ENCODE measurements at regions of chr7 and their contacts with region 1.

Region 1: GRCh38 chr7:93147363-93147762 is 822 bp downstream of the SAMD9L start:
- DNase-seq: peak; percentile 29 to 35
- H3K4me3 ChIP-seq: peak overlapping the region; percentile 43
- H3K27ac ChIP-seq: 0 out of 2 replicates have a peak overlapping the region, but pooled peaks have one; percentile 19
- H3K4me1 ChIP-seq: peaks cover 23% of the 10 kb centered on the region; the same call in 1 of the 2 replicates
- H3K27me3 ChIP-seq: no peaks in the 10 kb centered on the region
- CTCF ChIP-seq: no peak

Region 2: GRCh38 chr7:93228302-93228701 is 80.9 kb after region 1 on chr7:
- CTCF ChIA-PET with region 1: no interaction called
- POLR2A ChIA-PET with region 1: no interaction called
- intact Hi-C with region 1: no loop called
- DNase-seq: peak in 1 of 2 experiments; percentile 64
- H3K4me3 ChIP-seq: no peak overlapping the region
- H3K27ac ChIP-seq: no peak overlapping the region
- H3K4me1 ChIP-seq: peaks cover 14% of the 10 kb centered on the region; the same call in 1 of the 2 replicates
- H3K27me3 ChIP-seq: no peaks in the 10 kb centered on the region
- CTCF ChIP-seq: peak; percentile 90

Region 3: GRCh38 chr7:94301024-94301586 is 1153.7 kb after region 1 on chr7:
- CTCF ChIA-PET with region 1: no interaction called
- POLR2A ChIA-PET with region 1: interaction called, 25 read pairs
- intact Hi-C with region 1: no loop called
- DNase-seq: peak; percentile 87 to 88
- H3K4me3 ChIP-seq: 0 out of 2 replicates have a peak overlapping the region, but pooled peaks have one; percentile 2
- H3K27ac ChIP-seq: peak overlapping the region; percentile 86
- H3K4me1 ChIP-seq: peaks cover 31% of the 10 kb centered on the region
- H3K27me3 ChIP-seq: no peaks in the 10 kb centered on the region
- CTCF ChIP-seq: peak; percentile 15; the same call in 1 of the 2 replicates